GM12878 (cell line): ENCODE measurements at regions of chr21 and their contacts with region 1.

Region 1: DNA sequence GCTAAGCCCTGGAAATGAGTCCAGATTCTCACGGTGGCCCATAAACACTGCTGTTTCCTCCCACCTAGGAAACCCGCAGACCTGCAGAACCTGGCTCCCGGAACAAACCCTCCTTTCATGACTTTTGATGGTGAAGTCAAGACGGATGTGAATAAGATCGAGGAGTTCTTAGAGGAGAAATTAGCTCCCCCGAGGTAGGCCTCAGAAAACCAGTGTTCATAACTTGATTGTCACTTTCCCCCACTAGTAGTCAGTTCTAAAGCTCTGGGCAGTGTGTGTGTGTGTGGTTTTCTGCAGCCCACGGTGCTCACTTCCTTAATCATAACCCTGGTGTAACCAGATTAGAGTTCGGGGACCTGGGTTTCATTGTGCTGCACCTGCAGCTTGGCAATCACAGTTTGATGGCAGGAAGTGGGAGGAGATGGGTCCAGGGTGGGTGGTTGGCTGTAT is 39.1 kb downstream of the CLIC6 start:
- DNase-seq: peak; percentile 66
- ATAC-seq: peak; percentile 95
- H3K4me3 ChIP-seq: no peak overlapping the region
- H3K27ac ChIP-seq: peak overlapping the region; percentile 82
- H3K4me1 ChIP-seq: peaks cover 25% of the 10 kb centered on the region
- H3K27me3 ChIP-seq: no peaks in the 10 kb centered on the region
- CTCF ChIP-seq: no peak
- EP300 ChIP-seq: peak; percentile 35 to 55; a peak in 2 of 4 replicates
- POLR2A ChIP-seq: no peak
- RAD21 ChIP-seq: no peak

Region 2: DNA sequence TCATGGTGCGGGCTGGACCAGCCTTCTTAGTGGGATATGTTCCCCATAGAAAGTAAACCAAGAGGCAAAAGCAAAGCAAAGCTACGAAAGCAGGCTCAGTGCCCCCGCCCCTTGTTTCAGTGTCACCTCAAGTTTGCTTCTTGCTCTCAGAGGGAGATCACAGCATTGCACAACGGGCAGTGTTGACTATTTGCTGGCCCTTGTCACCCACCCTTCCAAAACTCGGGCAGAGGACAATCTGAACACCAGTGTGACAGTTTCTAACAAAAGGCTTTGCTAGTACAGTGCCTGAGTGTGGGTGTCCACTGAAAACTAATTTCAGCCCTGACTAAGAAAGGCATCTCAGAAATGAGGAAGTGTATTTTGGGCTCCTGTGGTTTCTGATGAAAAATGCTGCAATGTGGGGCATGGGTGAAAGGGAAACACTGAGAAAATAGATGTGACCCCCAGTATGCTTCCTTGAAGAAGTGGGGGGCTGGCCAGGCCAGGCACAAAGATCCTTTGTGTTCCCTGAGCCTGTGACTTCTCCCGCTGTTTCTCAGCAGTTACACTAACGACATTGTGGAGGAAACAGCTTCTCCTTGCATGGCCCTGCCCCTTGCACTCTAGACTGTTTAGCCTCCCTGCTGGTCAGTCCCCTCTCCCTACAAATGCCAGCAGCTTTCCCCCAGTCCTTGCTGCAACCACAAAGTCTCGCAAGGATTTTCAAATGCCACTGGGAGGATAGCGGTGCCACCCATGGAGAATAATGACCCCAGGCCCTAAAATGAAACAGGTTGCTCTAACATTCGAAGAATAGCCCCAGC is 162.6 kb before region 1 on chr21:
- CTCF ChIA-PET with region 1: no interaction called
- POLR2A ChIA-PET with region 1: no interaction called
- RAD21 ChIA-PET with region 1: no interaction called
- SMC1A ChIA-PET with region 1: no interaction called
- in situ Hi-C with region 1: no loop called
- intact Hi-C with region 1: no loop called
- DNase-seq: peak; percentile 86
- ATAC-seq: peak; percentile 93
- H3K4me3 ChIP-seq: peak overlapping the region; percentile 44; the same call in 1 of the 2 replicates
- H3K27ac ChIP-seq: peak overlapping the region; percentile 84
- H3K4me1 ChIP-seq: peaks cover 38% of the 10 kb centered on the region
- H3K27me3 ChIP-seq: no peaks in the 10 kb centered on the region
- CTCF ChIP-seq: no peak
- EP300 ChIP-seq: peak; percentile 34 to 87; a peak in 3 of 4 replicates
- POLR2A ChIP-seq: peak; percentile 68; the same call in 1 of the 2 replicates
- RAD21 ChIP-seq: no peak

Region 3: GRCh38 chr21:34722684-34723300 is 14.9 kb after region 1 on chr21:
- CTCF ChIA-PET with region 1: interaction called, 12 read pairs
- POLR2A ChIA-PET with region 1: interaction called, 4 read pairs
- RAD21 ChIA-PET with region 1: interaction called, 3 read pairs
- SMC1A ChIA-PET with region 1: interaction called, 5 read pairs
- in situ Hi-C with region 1: no loop called
- intact Hi-C with region 1: no loop called
- DNase-seq: no peak
- ATAC-seq: peak; percentile 66
- H3K4me3 ChIP-seq: no peak overlapping the region
- H3K27ac ChIP-seq: no peak overlapping the region
- H3K4me1 ChIP-seq: no peaks in the 10 kb centered on the region
- H3K27me3 ChIP-seq: no peaks in the 10 kb centered on the region
- CTCF ChIP-seq: peak; percentile 45 to 77 (median 76)
- EP300 ChIP-seq: no peak
- POLR2A ChIP-seq: no peak
- RAD21 ChIP-seq: peak; percentile 28; the same call in 1 of the 2 replicates

Region 4: GRCh38 chr21:34771512-34772028 is 63.7 kb after region 1 on chr21:
- CTCF ChIA-PET with region 1: no interaction called
- POLR2A ChIA-PET with region 1: no interaction called
- RAD21 ChIA-PET with region 1: no interaction called
- SMC1A ChIA-PET with region 1: no interaction called
- in situ Hi-C with region 1: no loop called
- intact Hi-C with region 1: no loop called
- DNase-seq: no peak
- ATAC-seq: no peak
- H3K4me3 ChIP-seq: no peak overlapping the region
- H3K27ac ChIP-seq: no peak overlapping the region
- H3K4me1 ChIP-seq: no peaks in the 10 kb centered on the region
- H3K27me3 ChIP-seq: peaks cover 0 to 6% of the 10 kb centered on the region in 2 experiments; a peak in 1 of 4 replicates
- CTCF ChIP-seq: no peak
- EP300 ChIP-seq: no peak
- POLR2A ChIP-seq: no peak
- RAD21 ChIP-seq: no peak

Region 5: GRCh38 chr21:34933609-34934335 is 225.9 kb after region 1 on chr21:
- CTCF ChIA-PET with region 1: no interaction called
- POLR2A ChIA-PET with region 1: no interaction called
- RAD21 ChIA-PET with region 1: no interaction called
- SMC1A ChIA-PET with region 1: no interaction called
- in situ Hi-C with region 1: no loop called
- intact Hi-C with region 1: no loop called
- DNase-seq: no peak
- ATAC-seq: peak; percentile 47; the same call in 1 of the 3 replicates
- H3K4me3 ChIP-seq: no peak overlapping the region
- H3K27ac ChIP-seq: no peak overlapping the region
- H3K4me1 ChIP-seq: peaks cover 5% of the 10 kb centered on the region
- H3K27me3 ChIP-seq: 0 out of 4 replicates have a peak, but pooled peaks cover 0 to 2% of the 10 kb centered on the region in 2 experiments
- CTCF ChIP-seq: no peak
- EP300 ChIP-seq: no peak
- POLR2A ChIP-seq: no peak
- RAD21 ChIP-seq: no peak

Region 6: DNA sequence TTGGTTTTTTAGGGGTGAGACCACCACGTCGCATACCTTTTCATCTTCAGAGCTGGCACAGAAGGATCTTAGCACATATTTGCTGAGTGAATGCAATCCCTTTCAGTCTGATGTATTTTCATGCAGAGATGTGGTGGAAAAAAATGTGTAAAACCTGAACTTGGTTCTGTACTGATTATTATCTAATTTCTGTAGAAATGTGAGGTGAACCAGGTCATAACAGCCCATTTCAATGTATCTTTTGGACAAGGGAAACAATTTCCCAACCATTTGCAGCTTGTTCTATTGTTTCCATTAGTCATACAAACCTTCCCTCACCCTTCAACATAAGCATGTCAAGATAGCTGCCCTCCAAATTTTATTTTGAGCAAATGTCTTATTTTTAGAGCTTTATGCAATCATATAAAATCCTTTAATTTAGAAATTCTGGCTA is 388.0 kb after region 1 on chr21:
- CTCF ChIA-PET with region 1: no interaction called
- POLR2A ChIA-PET with region 1: no interaction called
- RAD21 ChIA-PET with region 1: no interaction called
- SMC1A ChIA-PET with region 1: no interaction called
- in situ Hi-C with region 1: no loop called
- intact Hi-C with region 1: no loop called
- DNase-seq: no peak
- ATAC-seq: no peak
- H3K4me3 ChIP-seq: no peak overlapping the region
- H3K27ac ChIP-seq: no peak overlapping the region
- H3K4me1 ChIP-seq: no peaks in the 10 kb centered on the region
- H3K27me3 ChIP-seq: no peaks in the 10 kb centered on the region
- CTCF ChIP-seq: no peak
- EP300 ChIP-seq: no peak
- POLR2A ChIP-seq: no peak
- RAD21 ChIP-seq: no peak